Ascending aorta (tissue), 2 donors: ENCODE measurements at regions of chr3 and their contacts with region 1.

Region 1: DNA sequence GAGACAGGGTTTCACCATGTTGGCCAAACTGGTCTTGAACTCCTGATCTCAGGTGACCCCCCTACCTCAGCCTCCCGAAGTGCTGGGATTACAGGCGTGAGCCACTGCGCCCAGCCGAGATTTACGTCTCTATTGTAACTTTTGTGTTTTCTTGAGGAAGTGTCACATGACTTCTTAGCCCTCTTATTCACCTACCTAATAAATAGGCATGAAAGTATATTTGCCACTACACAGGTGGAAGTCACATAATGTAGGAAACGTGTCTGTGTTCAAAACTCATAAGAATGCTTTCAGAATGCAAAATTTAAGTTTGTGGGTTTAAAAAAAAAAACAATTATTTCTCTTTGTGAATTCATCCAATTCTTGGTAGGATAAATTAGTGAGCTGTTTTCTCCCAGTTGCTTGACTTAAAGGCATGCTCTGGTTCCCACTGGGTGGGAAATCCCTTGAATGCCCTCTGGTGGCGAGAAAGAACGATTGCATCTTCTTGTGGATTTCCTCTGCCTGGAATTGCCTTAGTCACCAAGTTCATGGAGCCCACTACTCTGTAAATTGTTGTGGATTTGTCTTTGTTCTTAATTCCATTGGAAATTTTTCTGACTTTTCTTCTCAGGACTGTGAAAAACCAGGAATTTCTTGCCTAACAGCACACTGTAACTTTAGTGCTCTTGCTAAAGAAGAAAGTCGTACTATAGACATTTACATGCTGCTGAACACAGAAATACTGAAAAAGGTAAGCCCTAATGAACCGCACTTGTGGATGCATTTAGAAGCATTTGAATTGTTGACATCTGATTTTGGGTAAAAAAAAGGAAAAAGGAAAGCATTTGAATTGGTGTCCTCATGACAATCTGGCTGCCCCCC is 82.2 kb upstream of the CTDSPL start:
- DNase-seq: no peak
- H3K4me3 ChIP-seq: no peak overlapping the region
- H3K27ac ChIP-seq: peak overlapping the region in 1 of 2 donors; percentile 32
- H3K4me1 ChIP-seq: peaks cover 0 to 10% of the 10 kb centered on the region in 2 donors
- H3K27me3 ChIP-seq: no peaks in the 10 kb centered on the region
- CTCF ChIP-seq: peak; percentile 74 to 88 (median 85)

Region 2: DNA sequence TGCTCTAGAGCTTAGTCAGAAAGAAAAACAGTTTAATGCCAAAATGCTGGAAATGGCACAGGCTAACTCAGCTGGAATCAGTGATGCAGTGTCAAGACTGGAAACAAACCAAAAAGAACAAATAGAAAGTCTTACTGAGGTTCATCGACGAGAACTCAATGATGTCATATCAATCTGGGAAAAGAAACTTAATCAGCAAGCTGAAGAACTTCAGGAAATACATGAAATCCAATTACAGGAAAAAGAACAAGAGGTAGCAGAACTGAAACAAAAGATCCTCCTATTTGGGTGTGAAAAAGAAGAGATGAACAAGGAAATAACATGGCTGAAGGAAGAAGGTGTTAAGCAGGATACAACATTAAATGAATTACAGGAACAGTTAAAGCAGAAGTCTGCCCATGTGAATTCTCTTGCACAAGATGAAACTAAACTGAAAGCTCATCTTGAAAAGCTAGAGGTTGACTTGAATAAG is 454.6 kb before region 1 on chr3:
- intact Hi-C with region 1: loop called (anchors 10 kb)
- DNase-seq: no peak
- H3K4me3 ChIP-seq: no peak overlapping the region
- H3K27ac ChIP-seq: peak overlapping the region; percentile 37 to 66
- H3K4me1 ChIP-seq: peaks cover 4 to 53% of the 10 kb centered on the region in 2 donors
- H3K27me3 ChIP-seq: no peaks in the 10 kb centered on the region
- CTCF ChIP-seq: no peak

Region 3: GRCh38 chr3:37537914-37538691 is 241.4 kb before region 1 on chr3:
- intact Hi-C with region 1: loop called (anchors 5 kb)
- DNase-seq: peak in 1 of 2 donors; percentile 72
- H3K4me3 ChIP-seq: peak overlapping the region in 1 of 2 donors; percentile 12
- H3K27ac ChIP-seq: peak overlapping the region; percentile 71 to 73
- H3K4me1 ChIP-seq: peaks cover 8 to 32% of the 10 kb centered on the region in 2 donors
- H3K27me3 ChIP-seq: no peaks in the 10 kb centered on the region
- CTCF ChIP-seq: peak in 1 of 3 experiments; percentile 7

Region 4: GRCh38 chr3:37967260-37967881 is 187.8 kb after region 1 on chr3:
- intact Hi-C with region 1: no loop called
- DNase-seq: peak in 1 of 2 donors; percentile 84
- H3K4me3 ChIP-seq: no peak overlapping the region
- H3K27ac ChIP-seq: no peak overlapping the region
- H3K4me1 ChIP-seq: peaks cover 0 to 8% of the 10 kb centered on the region in 2 donors
- H3K27me3 ChIP-seq: no peaks in the 10 kb centered on the region
- CTCF ChIP-seq: peak; percentile 56 to 85 (median 83)